ENCODE measurements at regions of chr17 and their contacts with region 1.

Region 1: GRCh38 chr17:47188876-47189731 is at the start of gene CDC27:
- DNase-seq: peak; percentile 98
- ATAC-seq: peak; percentile 95 to 96
- H3K4me3 ChIP-seq: peak within 1 kb of the TSS; percentile 75
- H3K27ac ChIP-seq: peak within 1 kb of the TSS; percentile 84 to 90
- H3K4me1 ChIP-seq: peaks cover 33% of the 10 kb centered on the region
- CTCF ChIP-seq: no peak
- EP300 ChIP-seq: no peak
- POLR2A ChIP-seq: peak; percentile 84
- RAD21 ChIP-seq: no peak
- polyA plus RNA-seq, gene CDC27: 132 and 150 TPM in 2 replicates

Region 2: DNA sequence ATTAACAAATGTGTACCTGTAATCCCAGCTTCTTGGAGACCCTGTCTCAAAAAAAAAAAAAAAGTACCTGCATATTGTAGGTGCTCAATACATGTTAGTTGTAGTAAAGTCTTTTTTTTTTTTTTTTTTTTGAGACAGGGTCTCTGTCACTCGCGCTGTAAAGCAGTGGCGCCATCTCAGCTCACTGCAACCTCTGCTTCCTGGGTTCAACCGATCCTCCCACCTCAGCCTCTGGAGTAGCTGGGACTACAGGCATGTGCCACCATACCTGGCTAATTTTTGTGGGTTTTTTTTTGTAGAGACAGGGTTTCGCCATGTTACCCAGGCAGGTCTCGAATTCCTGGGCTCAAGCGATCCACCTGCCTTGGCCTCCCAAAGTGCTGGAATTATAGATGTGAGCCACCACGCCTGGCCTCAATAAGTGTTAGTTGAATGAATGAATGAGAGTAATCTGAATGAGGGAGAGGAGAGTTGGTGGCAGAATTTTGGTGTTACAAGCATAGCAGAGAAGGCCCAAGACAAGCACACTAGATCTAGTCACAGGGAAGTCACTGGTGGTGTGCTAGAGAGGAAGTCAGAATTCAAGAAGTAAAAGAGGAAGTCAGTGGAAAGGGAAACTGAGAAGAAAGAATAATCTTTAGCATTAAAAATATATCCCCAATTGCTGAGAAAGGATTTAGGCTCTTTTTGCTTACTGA is 10.7 kb after region 1 on chr17:
- CTCF ChIA-PET with region 1: interaction called, 17 read pairs
- POLR2A ChIA-PET with region 1: interaction called, 7 read pairs
- DNase-seq: no peak
- ATAC-seq: no peak
- H3K4me3 ChIP-seq: no peak overlapping the region
- H3K27ac ChIP-seq: no peak overlapping the region
- H3K4me1 ChIP-seq: no peaks in the 10 kb centered on the region
- CTCF ChIP-seq: no peak
- EP300 ChIP-seq: no peak
- POLR2A ChIP-seq: no peak
- RAD21 ChIP-seq: no peak